GM12878 (cell line): ENCODE measurements at regions of chr5 and their contacts with region 1.

Region 1: DNA sequence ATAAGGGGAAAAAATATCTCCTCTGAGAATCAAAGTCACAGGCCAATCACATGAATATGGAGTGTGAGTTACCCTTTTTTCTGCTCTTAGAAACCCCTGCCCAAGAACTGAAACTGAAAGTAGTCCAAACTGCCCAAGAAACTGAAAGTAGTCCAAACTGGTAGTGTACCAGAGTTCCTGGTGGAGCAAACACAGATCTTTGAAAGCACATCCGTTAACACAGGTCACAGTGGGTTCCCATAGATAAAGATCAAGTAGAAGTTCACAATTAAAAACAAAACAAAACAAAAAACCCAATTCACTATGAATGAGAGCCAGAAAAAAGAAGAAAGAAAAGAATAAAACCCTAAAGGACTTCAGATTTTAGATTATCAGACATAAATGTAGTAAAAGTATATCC is 332.4 kb upstream of the EFNA5 start:
- DNase-seq: peak; percentile 70
- ATAC-seq: peak; percentile 99
- H3K4me3 ChIP-seq: no peak overlapping the region
- H3K27ac ChIP-seq: peak overlapping the region; percentile 55
- H3K4me1 ChIP-seq: peaks cover 9% of the 10 kb centered on the region; the same call in 1 of the 2 replicates
- H3K27me3 ChIP-seq: no peaks in the 10 kb centered on the region
- CTCF ChIP-seq: no peak
- EP300 ChIP-seq: no peak
- POLR2A ChIP-seq: no peak
- RAD21 ChIP-seq: no peak

Region 2: GRCh38 chr5:107979291-107979690 is 23.9 kb before region 1 on chr5:
- CTCF ChIA-PET with region 1: interaction called, 3 read pairs
- POLR2A ChIA-PET with region 1: no interaction called
- RAD21 ChIA-PET with region 1: no interaction called
- SMC1A ChIA-PET with region 1: interaction called, 11 read pairs
- in situ Hi-C with region 1: no loop called
- intact Hi-C with region 1: no loop called
- DNase-seq: no peak
- ATAC-seq: no peak
- H3K4me3 ChIP-seq: no peak overlapping the region
- H3K27ac ChIP-seq: no peak overlapping the region
- H3K4me1 ChIP-seq: no peaks in the 10 kb centered on the region
- H3K27me3 ChIP-seq: no peaks in the 10 kb centered on the region
- CTCF ChIP-seq: no peak
- EP300 ChIP-seq: no peak
- POLR2A ChIP-seq: no peak
- RAD21 ChIP-seq: no peak